ENCODE measurements at regions of chr9 and their contacts with region 1.

Region 1: GRCh38 chr9:136545966-136546698 is at the start of gene NOTCH1:
- DNase-seq: peak; percentile 77 to 91 (median 86)
- ATAC-seq: peak; percentile 89
- H3K4me3 ChIP-seq: peak within 1 kb of the TSS; percentile 81
- H3K4me3 Mint-ChIP-seq: peak within 1 kb of the TSS; percentile 78 to 95 (median 88)
- H3K27ac ChIP-seq: peak within 1 kb of the TSS; percentile 80
- H3K27ac Mint-ChIP-seq: peak within 1 kb of the TSS; percentile 57 to 90 (median 81)
- H3K4me1 ChIP-seq: peaks cover 20 to 32% of the 10 kb centered on the region in 2 donors
- H3K4me1 Mint-ChIP-seq: peaks cover under 1 to 43% (median 28%) of the 10 kb centered on the region in 7 donors
- H3K27me3 ChIP-seq: no peaks in the 10 kb centered on the region
- H3K27me3 Mint-ChIP-seq: no peaks in the 10 kb centered on the region
- total RNA-seq, gene NOTCH1: 49.7 to 92.9 (median 58.0) TPM

Region 2: GRCh38 chr9:136488247-136489214 is 57.6 kb before region 1 on chr9:
- CTCF ChIA-PET with region 1: no interaction called
- POLR2A ChIA-PET with region 1: interaction called, 3 read pairs
- intact Hi-C with region 1: loop called (anchors 1 kb)
- DNase-seq: peak; percentile 54 to 85 (median 73)
- ATAC-seq: peak; percentile 59
- H3K4me3 ChIP-seq: no peak overlapping the region
- H3K4me3 Mint-ChIP-seq: peak overlapping the region in 1 of 10 donors; percentile 47
- H3K27ac ChIP-seq: no peak overlapping the region
- H3K27ac Mint-ChIP-seq: no peak overlapping the region
- H3K4me1 ChIP-seq: peaks cover 3 to 10% of the 10 kb centered on the region in 2 donors
- H3K4me1 Mint-ChIP-seq: peaks cover 3 to 8% (median 5%) of the 10 kb centered on the region in 7 donors
- H3K27me3 ChIP-seq: no peaks in the 10 kb centered on the region
- H3K27me3 Mint-ChIP-seq: no peaks in the 10 kb centered on the region

Region 3: DNA sequence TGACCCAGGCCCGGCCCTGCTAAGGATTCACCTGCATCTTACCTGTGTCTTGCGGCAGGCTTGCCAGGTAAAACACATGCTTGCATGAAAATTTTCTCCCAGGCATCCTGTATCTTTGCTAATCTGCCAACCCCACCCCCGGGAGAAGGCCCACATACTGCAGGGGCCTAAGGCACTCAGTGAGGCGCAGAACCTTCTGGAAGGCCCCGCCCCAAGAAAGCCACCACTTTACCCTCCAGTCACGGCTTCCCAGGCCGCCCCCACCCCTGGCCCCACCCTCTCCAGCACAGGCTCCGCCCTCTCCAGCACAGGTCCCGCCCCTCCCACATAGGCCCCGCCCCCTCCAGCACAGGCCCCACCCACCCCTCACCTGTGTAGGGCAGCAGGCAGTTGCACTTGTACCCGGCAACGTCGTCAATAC is 33.5 kb before region 1 on chr9:
- CTCF ChIA-PET with region 1: no interaction called
- POLR2A ChIA-PET with region 1: no interaction called
- intact Hi-C with region 1: loop called (anchors 2 to 5 kb)
- DNase-seq: no peak
- ATAC-seq: peak; percentile 76
- H3K4me3 ChIP-seq: no peak overlapping the region
- H3K4me3 Mint-ChIP-seq: no peak overlapping the region
- H3K27ac ChIP-seq: no peak overlapping the region
- H3K27ac Mint-ChIP-seq: no peak overlapping the region
- H3K4me1 ChIP-seq: no peaks in the 10 kb centered on the region
- H3K4me1 Mint-ChIP-seq: no peaks in the 10 kb centered on the region
- H3K27me3 ChIP-seq: no peaks in the 10 kb centered on the region
- H3K27me3 Mint-ChIP-seq: no peaks in the 10 kb centered on the region

Region 4: DNA sequence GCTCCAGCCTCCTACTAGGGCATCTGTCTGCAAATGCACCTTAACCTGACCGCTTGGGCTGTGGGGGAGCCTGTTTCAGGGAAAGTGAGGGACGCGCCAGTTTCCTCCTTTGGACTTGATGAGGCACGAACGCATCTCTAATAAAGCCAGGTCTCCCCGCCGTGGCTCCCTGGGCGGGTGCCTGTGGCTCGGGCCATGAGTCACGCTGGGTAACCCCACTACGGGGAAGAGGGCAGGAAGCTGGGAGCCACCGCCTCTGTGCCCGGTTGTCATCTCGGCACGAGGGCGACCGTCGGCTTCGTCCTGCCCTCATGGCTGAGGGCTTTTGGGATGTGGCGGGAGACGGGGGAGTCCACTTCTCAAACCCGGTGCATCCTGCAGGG is 12.4 kb before region 1 on chr9:
- CTCF ChIA-PET with region 1: no interaction called
- POLR2A ChIA-PET with region 1: interaction called, 13 read pairs
- intact Hi-C with region 1: loop called (anchors 1 to 2 kb)
- DNase-seq: peak; percentile 22 to 79 (median 40)
- ATAC-seq: peak; percentile 76
- H3K4me3 ChIP-seq: peak overlapping the region; percentile 62
- H3K4me3 Mint-ChIP-seq: peak overlapping the region; percentile 69 to 83 (median 78)
- H3K27ac ChIP-seq: peak overlapping the region; percentile 72
- H3K27ac Mint-ChIP-seq: peak overlapping the region; percentile 72 to 93 (median 91)
- H3K4me1 ChIP-seq: peaks cover 66 to 86% of the 10 kb centered on the region in 2 donors
- H3K4me1 Mint-ChIP-seq: peaks cover 27 to 75% (median 43%) of the 10 kb centered on the region in 7 donors
- H3K27me3 ChIP-seq: no peaks in the 10 kb centered on the region
- H3K27me3 Mint-ChIP-seq: no peaks in the 10 kb centered on the region

Region 5: DNA sequence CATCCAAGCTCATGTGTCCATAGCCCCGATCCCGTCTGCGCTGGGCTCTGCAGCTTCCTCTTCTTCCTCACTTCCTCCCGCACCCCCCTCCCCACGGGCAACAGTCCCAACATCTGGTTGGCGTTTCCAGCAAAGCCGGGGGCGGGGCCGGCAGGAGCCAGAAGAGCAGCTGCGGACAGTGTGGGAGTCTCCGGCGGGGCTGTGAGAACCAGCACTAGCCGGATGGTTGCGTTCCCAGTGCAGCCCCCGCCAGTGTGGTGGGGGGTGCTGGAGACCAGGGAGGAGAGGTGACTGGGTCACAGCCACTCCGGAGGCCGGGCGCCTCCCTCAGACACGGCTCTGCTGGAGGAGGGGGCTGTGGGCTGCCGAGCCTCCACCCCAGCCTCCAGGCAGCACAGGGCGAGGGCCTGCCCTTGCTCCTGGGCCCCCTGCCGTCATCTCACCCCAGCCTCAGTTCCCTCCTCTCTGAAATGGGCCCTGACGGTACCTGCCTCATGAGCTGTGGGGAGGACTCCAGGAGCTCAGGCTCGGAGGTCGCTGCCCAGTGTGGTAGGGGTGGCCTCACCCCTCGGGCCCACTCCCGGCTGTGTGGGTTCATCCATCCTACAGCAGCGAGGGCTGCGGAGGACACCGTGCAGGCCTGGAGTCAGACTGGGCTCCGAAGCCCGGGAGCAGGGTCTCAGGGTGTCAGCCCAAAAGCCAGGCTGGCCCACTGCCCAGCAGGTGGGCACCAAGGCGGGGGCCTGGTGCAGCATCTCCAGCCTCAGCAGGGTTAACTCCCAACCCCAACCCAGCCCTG is 41.2 kb after region 1 on chr9:
- CTCF ChIA-PET with region 1: no interaction called
- POLR2A ChIA-PET with region 1: interaction called, 4 read pairs
- intact Hi-C with region 1: loop called in 1 of 2 experiments (anchors 5 kb)
- DNase-seq: no peak
- ATAC-seq: peak; percentile 50
- H3K4me3 ChIP-seq: no peak overlapping the region
- H3K4me3 Mint-ChIP-seq: peak overlapping the region in 1 of 10 donors; percentile 57
- H3K27ac ChIP-seq: no peak overlapping the region
- H3K27ac Mint-ChIP-seq: no peak overlapping the region
- H3K4me1 ChIP-seq: peaks cover 4 to 22% of the 10 kb centered on the region in 2 donors
- H3K4me1 Mint-ChIP-seq: peaks cover 8 to 25% (median 18%) of the 10 kb centered on the region in 7 donors
- H3K27me3 ChIP-seq: no peaks in the 10 kb centered on the region
- H3K27me3 Mint-ChIP-seq: no peaks in the 10 kb centered on the region

Measured in naive thymus-derived CD4-positive, alpha-beta T cell (primary cell).